AG04449 (cell line): ENCODE measurements at regions of chr3 and their contacts with region 1.

Region 1: GRCh38 chr3:134212906-134213665 is 37.6 kb downstream of the RYK start:
- DNase-seq: no peak
- H3K4me3 ChIP-seq: no peak overlapping the region
- CTCF ChIP-seq: peak; percentile 96

Region 2: GRCh38 chr3:133937756-133938601 is 275.1 kb before region 1 on chr3:
- CTCF ChIA-PET with region 1: interaction called, 139 read pairs
- POLR2A ChIA-PET with region 1: no interaction called
- DNase-seq: peak; percentile 38
- H3K4me3 ChIP-seq: no peak overlapping the region
- CTCF ChIP-seq: no peak

Region 3: GRCh38 chr3:134197681-134198261 is 15.3 kb before region 1 on chr3:
- CTCF ChIA-PET with region 1: interaction called, 284 read pairs
- POLR2A ChIA-PET with region 1: no interaction called
- DNase-seq: peak; percentile 24
- H3K4me3 ChIP-seq: no peak overlapping the region
- CTCF ChIP-seq: peak; percentile 65

Region 4: DNA sequence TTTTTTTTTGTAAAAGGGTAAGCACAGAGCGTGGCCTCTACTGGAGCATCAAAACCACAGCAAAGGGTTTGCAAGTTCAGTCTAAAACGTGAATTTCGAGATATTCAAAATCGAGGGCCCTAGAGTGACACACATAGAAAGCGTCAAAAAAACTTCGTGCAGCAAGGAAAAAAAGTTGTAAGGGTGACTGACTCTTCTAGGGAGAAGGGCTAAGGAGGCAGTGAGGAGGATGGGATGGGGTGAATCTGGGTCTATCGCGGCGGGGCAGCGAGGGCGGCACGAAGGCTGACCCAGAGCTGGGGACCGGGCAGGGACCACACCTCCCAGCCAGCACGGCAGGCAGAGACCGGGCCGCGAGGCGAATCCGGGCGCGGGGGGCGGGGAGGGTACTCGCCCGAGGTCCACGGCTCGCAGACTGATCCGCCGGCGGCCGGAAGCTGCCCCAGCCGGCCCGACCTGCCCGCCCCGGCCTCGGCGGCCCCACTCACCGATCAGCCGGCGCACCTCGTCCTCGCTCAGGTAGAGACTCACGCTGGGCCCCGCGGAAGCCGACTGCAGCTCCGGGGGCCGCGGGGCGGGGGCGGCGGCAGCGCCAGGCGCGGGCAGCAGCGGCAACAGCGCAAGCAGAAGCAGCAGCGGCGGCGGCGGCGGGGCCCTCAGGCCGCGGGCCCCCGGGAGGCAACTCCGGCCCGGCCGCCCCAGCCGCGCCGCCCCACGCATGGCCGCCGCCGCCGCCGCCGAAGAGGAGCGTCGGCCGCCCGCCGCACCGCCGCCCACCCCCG is 37.0 kb after region 1 on chr3:
- CTCF ChIA-PET with region 1: interaction called, 130 read pairs
- POLR2A ChIA-PET with region 1: interaction called, 3 read pairs
- DNase-seq: no peak
- H3K4me3 ChIP-seq: peak overlapping the region; percentile 86
- CTCF ChIP-seq: no peak

Region 5: GRCh38 chr3:134299185-134299887 is 86.2 kb after region 1 on chr3:
- CTCF ChIA-PET with region 1: interaction called, 209 read pairs
- POLR2A ChIA-PET with region 1: no interaction called
- DNase-seq: no peak
- H3K4me3 ChIP-seq: no peak overlapping the region
- CTCF ChIP-seq: peak; percentile 47

Region 6: GRCh38 chr3:134317106-134317947 is 104.2 kb after region 1 on chr3:
- CTCF ChIA-PET with region 1: no interaction called
- POLR2A ChIA-PET with region 1: no interaction called
- DNase-seq: no peak
- H3K4me3 ChIP-seq: no peak overlapping the region
- CTCF ChIP-seq: no peak

Region 7: DNA sequence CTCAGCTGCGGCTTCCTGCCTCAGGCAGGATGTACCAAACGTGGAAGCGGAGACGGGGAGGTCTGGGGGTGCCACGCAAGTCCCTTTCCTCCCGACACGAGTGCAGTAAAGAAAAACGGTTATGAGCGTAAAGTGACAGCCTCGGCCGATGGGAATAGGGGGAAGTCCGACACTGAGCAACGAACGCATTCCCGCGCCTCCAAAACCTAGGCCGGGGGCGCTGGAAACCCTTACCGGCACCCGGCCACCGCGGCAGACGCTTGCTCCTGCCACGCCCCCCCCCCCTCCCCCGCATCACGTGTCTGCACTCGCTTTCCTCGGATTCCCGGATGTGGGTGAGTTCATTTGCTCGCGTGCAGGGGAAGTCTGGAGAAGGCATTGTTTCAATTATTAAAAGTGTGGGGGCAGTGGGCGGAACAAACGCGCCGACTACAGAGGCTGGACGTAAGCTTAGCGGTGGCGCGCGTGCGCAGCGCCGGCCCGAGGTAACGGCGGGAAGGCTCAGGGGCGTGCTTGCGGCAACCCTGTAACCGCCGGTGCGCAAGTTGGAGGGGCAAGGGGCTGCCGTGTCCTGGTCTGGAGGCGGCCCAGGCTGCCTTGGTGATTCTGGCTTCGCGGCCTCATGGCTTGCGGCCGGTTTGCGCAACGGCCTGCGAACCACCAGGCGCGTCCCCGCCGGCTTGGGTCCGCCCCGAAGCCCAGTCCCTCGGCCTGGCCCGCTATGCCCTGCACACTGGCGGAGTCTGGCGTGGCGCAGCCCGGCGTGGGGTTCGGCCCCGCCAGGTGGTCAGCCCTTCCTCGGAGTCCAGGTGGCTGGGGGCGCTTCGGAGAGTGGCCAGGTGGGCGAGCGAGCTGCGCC is 272.9 kb after region 1 on chr3 and contains the starts of genes ANAPC13 and CEP63:
- CTCF ChIA-PET with region 1: interaction called, 35 read pairs
- POLR2A ChIA-PET with region 1: no interaction called
- DNase-seq: peak; percentile 96
- H3K4me3 ChIP-seq: peak within 1 kb of the TSS; percentile 82
- CTCF ChIP-seq: no peak